ENCODE measurements at regions of chr14 and their contacts with region 1.

Region 1: GRCh38 chr14:104895786-104896661 is 28.7 kb upstream of the PLD4 start:
- DNase-seq: no peak
- CTCF ChIP-seq: no peak

Region 2: DNA sequence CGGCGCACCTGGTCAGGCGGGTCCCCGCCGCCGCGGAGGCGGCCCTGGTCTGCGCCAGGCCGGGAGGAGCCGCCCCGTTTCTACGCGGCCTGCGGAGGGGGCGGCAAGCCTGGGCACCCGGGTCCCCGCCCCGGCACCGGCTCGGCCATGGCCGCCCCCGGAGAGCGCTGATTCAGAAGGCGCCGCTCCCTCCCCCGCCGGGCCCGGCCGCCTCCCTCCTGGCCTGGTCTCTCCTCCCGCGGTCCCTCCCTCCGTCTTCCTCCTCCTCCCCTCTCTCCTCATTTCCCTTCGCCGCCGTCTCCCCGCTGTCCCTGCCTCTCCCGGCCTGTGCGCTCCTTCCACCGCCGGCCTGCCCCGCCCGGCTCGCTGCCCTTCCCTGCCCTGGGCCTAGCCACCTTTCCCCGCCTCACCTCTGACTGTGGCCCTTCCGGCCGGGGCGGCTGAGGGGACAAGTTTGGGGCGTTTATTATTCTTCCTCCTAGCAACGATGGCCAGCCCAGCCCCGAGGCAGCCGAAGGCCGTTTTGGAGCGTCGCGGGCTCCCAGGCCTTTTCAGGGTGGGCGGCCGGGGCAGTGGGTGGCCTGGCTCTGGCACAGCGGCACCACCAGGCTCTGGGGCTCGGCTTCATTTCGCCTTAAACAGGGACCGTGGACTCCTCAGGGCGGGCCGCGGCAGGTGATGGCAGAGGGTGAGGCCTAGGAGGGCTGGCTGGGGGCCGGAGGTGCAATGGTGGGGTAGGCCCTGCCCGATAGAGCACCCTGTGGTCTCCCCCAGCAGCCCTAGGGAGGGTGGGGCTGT is 30.2 kb before region 1 on chr14:
- CTCF ChIA-PET with region 1: no interaction called
- POLR2A ChIA-PET with region 1: no interaction called
- DNase-seq: no peak
- CTCF ChIP-seq: no peak

Region 3: GRCh38 chr14:104924421-104925213 is 28.6 kb after region 1 on chr14 and contains the start of gene PLD4:
- CTCF ChIA-PET with region 1: interaction called, 17 read pairs
- POLR2A ChIA-PET with region 1: no interaction called
- DNase-seq: peak; percentile 68
- CTCF ChIP-seq: no peak

Region 4: DNA sequence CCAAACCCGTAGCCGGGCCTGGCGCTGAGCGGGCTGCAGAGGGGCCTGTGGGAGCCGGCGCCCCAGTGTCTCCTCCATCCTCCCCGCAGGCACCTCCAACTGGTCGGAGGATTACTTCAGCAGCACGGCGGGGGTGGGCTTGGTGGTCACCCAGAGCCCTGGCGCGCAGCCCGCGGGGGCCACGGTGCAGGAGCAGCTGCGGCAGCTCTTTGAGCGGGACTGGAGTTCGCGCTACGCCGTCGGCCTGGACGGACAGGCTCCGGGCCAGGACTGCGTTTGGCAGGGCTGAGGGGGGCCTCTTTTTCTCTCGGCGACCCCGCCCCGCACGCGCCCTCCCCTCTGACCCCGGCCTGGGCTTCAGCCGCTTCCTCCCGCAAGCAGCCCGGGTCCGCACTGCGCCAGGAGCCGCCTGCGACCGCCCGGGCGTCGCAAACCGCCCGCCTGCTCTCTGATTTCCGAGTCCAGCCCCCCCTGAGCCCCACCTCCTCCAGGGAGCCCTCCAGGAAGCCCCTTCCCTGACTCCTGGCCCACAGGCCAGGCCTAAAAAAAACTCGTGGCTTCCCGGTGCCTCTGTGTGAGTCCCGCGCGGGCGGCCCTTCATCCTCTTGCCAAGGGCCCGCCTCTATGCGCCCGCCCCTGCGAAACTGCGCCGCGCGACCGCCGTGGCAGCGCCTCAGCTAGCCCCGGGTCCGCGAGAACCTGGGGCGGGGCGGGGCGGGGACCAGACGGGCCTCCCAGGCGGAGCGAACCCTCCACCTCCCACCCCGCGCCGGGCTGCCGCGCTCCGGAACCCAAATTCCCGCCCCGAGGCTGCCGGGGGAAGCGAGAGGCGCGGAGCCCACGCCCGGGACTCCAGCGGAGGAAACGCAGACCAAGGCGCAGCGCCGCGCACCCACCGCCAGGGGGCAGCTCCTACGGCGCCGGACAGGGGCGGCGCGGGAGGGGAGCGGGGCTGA is 36.9 kb after region 1 on chr14:
- CTCF ChIA-PET with region 1: interaction called, 18 read pairs
- POLR2A ChIA-PET with region 1: no interaction called
- DNase-seq: peak; percentile 91
- CTCF ChIP-seq: peak; percentile 90

Region 5: GRCh38 chr14:104940526-104941150 is 44.6 kb after region 1 on chr14:
- CTCF ChIA-PET with region 1: interaction called, 18 read pairs
- POLR2A ChIA-PET with region 1: no interaction called
- DNase-seq: no peak
- CTCF ChIP-seq: peak; percentile 5

Region 6: GRCh38 chr14:105168979-105169507 is 273.0 kb after region 1 on chr14:
- CTCF ChIA-PET with region 1: no interaction called
- POLR2A ChIA-PET with region 1: no interaction called
- DNase-seq: no peak
- CTCF ChIP-seq: peak; percentile 54

Measured in GM10248 (cell line).